Vagina (tissue), 2 donors: ENCODE measurements at regions of chr6 and their contacts with region 1.

Region 1: GRCh38 chr6:133512410-133513016 is 271.4 kb downstream of the EYA4 start:
- DNase-seq: no peak
- H3K4me3 ChIP-seq: no peak overlapping the region
- H3K27ac ChIP-seq: no peak overlapping the region
- H3K4me1 ChIP-seq: no peaks in the 10 kb centered on the region
- H3K27me3 ChIP-seq: no peaks in the 10 kb centered on the region
- CTCF ChIP-seq: peak in 2 of 3 experiments; percentile 21 to 56
- POLR2A ChIP-seq: no peak

Region 2: GRCh38 chr6:132962936-132963868 is 549.3 kb before region 1 on chr6:
- intact Hi-C with region 1: loop called (anchors 10 kb)
- DNase-seq: no peak
- H3K4me3 ChIP-seq: no peak overlapping the region
- H3K27ac ChIP-seq: no peak overlapping the region
- H3K4me1 ChIP-seq: no peaks in the 10 kb centered on the region
- H3K27me3 ChIP-seq: no peaks in the 10 kb centered on the region
- CTCF ChIP-seq: peak in 2 of 3 experiments; percentile 21 to 43
- POLR2A ChIP-seq: no peak

Region 3: GRCh38 chr6:133184798-133185372 is 327.6 kb before region 1 on chr6:
- intact Hi-C with region 1: loop called (anchors 10 kb)
- DNase-seq: no peak
- H3K4me3 ChIP-seq: no peak overlapping the region
- H3K27ac ChIP-seq: no peak overlapping the region
- H3K4me1 ChIP-seq: no peaks in the 10 kb centered on the region
- H3K27me3 ChIP-seq: no peaks in the 10 kb centered on the region
- CTCF ChIP-seq: peak in 2 of 3 experiments; percentile 26 to 30
- POLR2A ChIP-seq: no peak

Region 4: GRCh38 chr6:133623065-133623464 is 110.6 kb after region 1 on chr6:
- intact Hi-C with region 1: no loop called
- DNase-seq: no peak
- H3K4me3 ChIP-seq: no peak overlapping the region
- H3K27ac ChIP-seq: no peak overlapping the region
- H3K4me1 ChIP-seq: peaks cover 7% of the 10 kb centered on the region
- H3K27me3 ChIP-seq: no peaks in the 10 kb centered on the region
- CTCF ChIP-seq: no peak
- POLR2A ChIP-seq: no peak